PC-9 (cell line): ENCODE measurements at regions of chr17 and their contacts with region 1.

Region 1: DNA sequence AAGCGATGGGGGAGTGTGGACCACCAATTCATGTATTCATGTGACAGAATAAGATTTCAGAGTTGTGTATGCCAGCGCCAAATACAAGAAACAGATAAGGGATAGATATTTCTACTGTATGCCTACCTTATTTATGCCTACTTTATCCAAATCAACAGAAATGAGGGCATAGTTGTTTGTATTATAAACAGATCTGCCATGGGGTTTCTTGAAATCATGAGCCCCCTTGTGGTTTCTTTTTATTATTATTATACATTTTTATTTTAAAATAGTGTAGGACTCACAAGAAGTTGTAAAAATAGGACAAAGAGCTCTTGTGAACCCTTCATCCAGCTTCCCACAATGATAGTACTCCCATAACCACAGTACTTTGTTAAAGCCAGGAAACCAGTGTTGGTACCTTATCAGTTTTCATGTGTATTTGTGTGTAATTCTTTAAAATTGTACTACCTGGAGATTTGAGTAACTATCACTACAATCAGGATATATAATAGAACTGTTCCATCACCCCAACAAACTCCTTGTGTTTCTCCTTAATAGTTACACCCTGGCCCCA is 229.4 kb downstream of the CCDC182 start:
- DNase-seq: peak in 1 of 2 experiments; percentile 11
- H3K4me3 ChIP-seq: no peak overlapping the region
- H3K27ac ChIP-seq: no peak overlapping the region
- H3K4me1 ChIP-seq: peaks cover 7% of the 10 kb centered on the region; the same call in 1 of the 2 replicates
- H3K27me3 ChIP-seq: 0 out of 2 replicates have a peak, but pooled peaks cover 7% of the 10 kb centered on the region
- CTCF ChIP-seq: peak; percentile 47

Region 2: GRCh38 chr17:57671667-57672632 is 156.2 kb after region 1 on chr17:
- CTCF ChIA-PET with region 1: interaction called, 23 read pairs
- POLR2A ChIA-PET with region 1: no interaction called
- intact Hi-C with region 1: no loop called
- DNase-seq: peak in 1 of 2 experiments; percentile 44
- H3K4me3 ChIP-seq: no peak overlapping the region
- H3K27ac ChIP-seq: no peak overlapping the region
- H3K4me1 ChIP-seq: no peaks in the 10 kb centered on the region
- H3K27me3 ChIP-seq: peaks cover 3% of the 10 kb centered on the region; the same call in 1 of the 2 replicates
- CTCF ChIP-seq: peak; percentile 91